ENCODE measurements at regions of chr1 and their contacts with region 1.

Region 1: GRCh38 chr1:77594366-77595112 is 87.9 kb downstream of the ZZZ3 start:
- DNase-seq: no peak
- H3K4me3 ChIP-seq: no peak overlapping the region
- H3K27ac ChIP-seq: no peak overlapping the region
- H3K4me1 ChIP-seq: peaks cover 0 to 8% (median 0%) of the 10 kb centered on the region in 4 donors
- H3K27me3 ChIP-seq: no peaks in the 10 kb centered on the region
- CTCF ChIP-seq: no peak
- EP300 ChIP-seq: no peak
- POLR2A ChIP-seq: no peak

Region 2: GRCh38 chr1:77639056-77639455 is 44.5 kb after region 1 on chr1:
- in situ Hi-C with region 1: no loop called
- intact Hi-C with region 1: loop called (anchors 1 kb)
- DNase-seq: no peak
- H3K4me3 ChIP-seq: no peak overlapping the region
- H3K27ac ChIP-seq: no peak overlapping the region
- H3K4me1 ChIP-seq: no peaks in the 10 kb centered on the region
- H3K27me3 ChIP-seq: no peaks in the 10 kb centered on the region
- CTCF ChIP-seq: no peak
- EP300 ChIP-seq: no peak
- POLR2A ChIP-seq: no peak

Region 3: DNA sequence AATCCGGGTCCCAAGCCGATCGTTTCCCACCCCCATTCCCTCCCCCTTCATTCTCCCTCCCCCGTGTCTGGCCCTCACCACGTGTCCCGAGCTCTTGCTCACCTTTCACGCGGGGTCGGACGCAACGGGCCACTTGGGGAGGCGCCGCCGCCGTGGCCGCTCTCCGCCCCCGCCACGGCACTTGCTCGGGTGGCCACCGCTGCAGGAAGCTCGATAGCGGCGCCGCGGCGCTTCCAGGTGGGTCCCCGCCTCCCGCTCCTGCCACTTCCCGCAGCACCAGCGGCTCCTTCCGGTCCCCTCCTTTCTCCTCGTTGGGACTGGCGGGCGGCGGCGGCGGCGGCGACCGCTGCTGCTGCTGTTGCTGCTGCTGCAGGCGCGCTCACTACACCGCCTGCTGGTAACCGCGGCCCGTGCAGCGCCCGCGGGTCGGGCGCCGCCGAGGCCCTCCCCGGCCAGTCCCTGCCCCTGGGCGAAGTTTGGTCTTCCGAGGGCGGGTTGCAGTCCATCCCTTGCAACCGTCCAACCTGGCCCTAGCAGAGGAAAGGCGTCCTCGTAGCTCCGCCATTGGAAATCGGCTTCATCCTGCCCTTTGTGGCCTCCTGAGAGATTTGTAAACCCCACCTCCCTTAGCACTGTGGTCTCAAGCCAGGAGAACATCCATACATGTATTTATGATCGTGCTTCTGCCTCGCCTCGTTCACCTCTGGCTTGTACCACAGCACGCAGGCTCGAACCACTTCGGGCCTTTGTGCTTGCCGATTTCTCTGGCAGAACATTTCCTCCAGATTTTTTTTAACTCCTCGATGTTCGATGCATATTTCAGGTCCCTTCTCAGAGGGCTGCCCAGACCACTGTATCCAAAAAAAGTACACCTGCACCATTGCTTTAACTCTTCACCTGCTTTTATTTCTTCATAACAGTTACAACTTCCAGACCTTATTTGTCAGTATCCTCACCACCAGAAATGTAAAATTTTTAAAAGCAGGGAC is 88.9 kb after region 1 on chr1:
- in situ Hi-C with region 1: no loop called
- intact Hi-C with region 1: no loop called
- DNase-seq: peak; percentile 94
- H3K4me3 ChIP-seq: peak overlapping the region; percentile 73 to 98 (median 85)
- H3K27ac ChIP-seq: peak overlapping the region; percentile 93 to 99 (median 96)
- H3K4me1 ChIP-seq: peaks cover 15 to 46% (median 33%) of the 10 kb centered on the region in 4 donors
- H3K27me3 ChIP-seq: no peaks in the 10 kb centered on the region
- CTCF ChIP-seq: peak; percentile 80 to 96 (median 91)
- EP300 ChIP-seq: no peak
- POLR2A ChIP-seq: peak; percentile 49

Region 4: DNA sequence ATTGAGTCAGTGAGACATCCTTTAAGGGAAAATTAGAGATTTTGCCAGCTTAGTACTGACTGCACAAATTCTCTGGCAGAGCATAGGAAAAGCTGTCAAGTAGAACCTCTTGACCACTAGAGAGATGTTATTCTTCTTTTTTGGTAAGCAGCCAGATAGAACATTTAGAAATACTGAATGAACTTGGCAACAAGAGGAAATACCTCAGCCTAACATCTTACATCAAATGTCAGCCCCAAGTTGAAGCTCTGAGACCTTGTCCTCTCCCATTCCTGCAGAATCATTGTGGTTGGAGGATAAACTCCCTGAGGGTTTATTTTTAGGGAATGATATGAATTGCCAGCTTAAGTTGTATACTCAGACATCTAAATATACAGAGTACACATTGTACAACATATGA is 238.4 kb after region 1 on chr1:
- in situ Hi-C with region 1: no loop called
- intact Hi-C with region 1: no loop called
- DNase-seq: no peak
- H3K4me3 ChIP-seq: no peak overlapping the region
- H3K27ac ChIP-seq: peak overlapping the region; percentile 76 to 87 (median 80)
- H3K4me1 ChIP-seq: peaks cover 12 to 62% (median 32%) of the 10 kb centered on the region in 4 donors
- H3K27me3 ChIP-seq: no peaks in the 10 kb centered on the region
- CTCF ChIP-seq: no peak
- EP300 ChIP-seq: no peak
- POLR2A ChIP-seq: no peak